ENCODE measurements at regions of chrX and their contacts with region 1.

Region 1: DNA sequence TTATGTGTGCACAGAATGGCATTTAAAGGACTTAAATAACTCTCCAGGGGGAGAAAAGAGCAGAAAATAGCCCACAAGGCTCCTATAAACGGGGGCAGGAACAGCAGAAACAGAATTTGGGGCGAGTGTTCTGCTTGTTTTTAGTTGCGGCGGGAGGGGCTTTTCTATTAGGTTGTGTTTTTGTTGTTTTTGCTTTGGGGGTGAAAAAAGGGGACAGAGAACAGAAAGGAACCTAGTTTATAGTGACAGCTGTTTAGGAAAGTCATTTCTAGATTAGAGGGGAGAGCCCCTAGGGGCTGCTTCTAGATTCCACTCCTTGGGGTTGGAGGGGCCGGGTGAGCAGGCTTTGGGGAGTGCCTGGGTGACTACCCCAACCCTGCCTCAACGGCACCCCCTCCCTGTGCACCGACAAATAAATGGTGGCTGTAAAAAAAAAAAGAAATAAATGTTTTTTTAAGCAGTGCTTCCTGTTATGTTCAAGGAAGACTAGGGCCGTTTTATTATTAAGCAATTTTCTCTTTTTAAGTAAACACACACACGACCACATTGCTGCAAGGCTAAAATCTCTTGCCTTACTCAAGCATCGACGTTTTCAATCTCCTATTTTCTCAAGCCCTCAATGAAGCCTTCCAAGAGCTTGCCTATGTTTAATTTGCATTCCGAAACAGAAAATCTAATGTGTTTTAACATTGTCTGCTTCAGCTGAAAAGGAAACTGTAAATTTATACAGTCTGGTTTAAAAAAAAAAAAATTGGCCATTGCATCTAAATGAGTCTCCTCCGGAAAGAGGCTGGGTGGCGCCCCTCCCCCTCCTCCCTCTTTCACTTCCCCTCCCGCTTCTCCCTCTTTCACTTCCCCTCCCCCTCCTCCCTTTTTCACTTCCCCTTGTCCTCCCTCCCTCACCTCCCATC is 123.3 kb upstream of the TBL1X start:
- H3K4me3 Mint-ChIP-seq: peak overlapping the region; percentile 72
- H3K27ac Mint-ChIP-seq: peak overlapping the region; percentile 98
- H3K4me1 Mint-ChIP-seq: peaks cover 38% of the 10 kb centered on the region
- H3K27me3 Mint-ChIP-seq: no peaks in the 10 kb centered on the region

Region 2: DNA sequence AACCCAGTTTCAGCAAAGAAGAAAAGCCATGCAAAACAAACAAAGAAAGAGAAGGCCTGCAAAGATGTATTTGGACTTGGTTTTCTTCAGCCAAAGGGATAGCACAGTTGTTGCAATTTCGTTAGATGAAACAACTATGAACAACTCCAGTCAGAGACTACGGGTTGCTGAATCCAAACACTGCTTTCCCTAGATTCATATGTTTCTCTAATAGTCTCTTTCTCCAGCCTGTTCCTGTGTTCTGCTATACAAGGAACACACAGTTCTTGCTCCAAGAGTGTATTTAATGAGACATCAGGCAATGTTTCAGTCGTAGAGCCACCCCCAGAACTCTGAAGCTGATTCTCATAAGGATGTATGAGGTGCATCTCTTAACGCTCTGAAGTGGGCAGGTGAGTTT is 39.2 kb before region 1 on chrX:
- intact Hi-C with region 1: no loop called
- H3K4me3 Mint-ChIP-seq: no peak overlapping the region
- H3K27ac Mint-ChIP-seq: no peak overlapping the region
- H3K4me1 Mint-ChIP-seq: peaks cover 5% of the 10 kb centered on the region
- H3K27me3 Mint-ChIP-seq: peaks cover 2% of the 10 kb centered on the region

Region 3: GRCh38 chrX:9312922-9313867 is 28.4 kb before region 1 on chrX:
- intact Hi-C with region 1: loop called (anchors 2 kb)
- H3K4me3 Mint-ChIP-seq: no peak overlapping the region
- H3K27ac Mint-ChIP-seq: no peak overlapping the region
- H3K4me1 Mint-ChIP-seq: peaks cover 19% of the 10 kb centered on the region
- H3K27me3 Mint-ChIP-seq: no peaks in the 10 kb centered on the region

Region 4: DNA sequence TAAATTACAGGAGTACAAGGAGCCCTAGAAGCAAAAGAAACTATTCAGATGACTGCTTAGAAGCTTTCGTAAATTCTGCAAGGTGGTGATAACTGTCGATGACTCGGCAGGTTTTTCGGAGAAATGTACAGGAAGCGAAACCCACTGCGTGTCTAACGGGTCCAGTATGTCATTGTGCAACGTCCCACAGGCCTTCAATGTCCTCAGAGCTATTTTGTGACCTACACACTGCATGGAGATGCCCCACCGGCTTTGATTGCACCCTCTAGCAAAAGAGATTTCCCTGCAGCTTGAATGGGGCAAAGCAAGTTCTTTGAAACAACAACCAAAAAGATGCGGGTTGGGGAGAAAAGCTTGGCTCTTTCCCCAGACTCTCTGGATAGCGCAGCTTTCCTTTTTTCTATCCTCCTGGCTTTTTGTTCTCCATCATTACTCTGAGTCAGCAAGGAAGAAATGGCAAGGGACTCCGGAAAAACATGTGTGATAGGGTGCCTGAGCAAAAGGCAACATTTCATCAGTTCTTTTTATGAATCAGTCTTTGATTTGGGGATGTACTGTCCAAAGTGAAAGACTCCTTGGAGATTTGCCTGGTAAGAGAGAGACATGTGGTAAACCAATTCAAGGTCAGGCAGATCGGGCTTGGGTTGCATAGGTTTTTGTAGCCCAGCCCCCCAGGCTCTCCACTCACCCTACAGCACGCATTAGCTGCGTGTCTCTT is 11.3 kb after region 1 on chrX:
- intact Hi-C with region 1: loop called (anchors 1 kb)
- H3K4me3 Mint-ChIP-seq: peak overlapping the region; percentile 57
- H3K27ac Mint-ChIP-seq: peak overlapping the region; percentile 90
- H3K4me1 Mint-ChIP-seq: peaks cover 38% of the 10 kb centered on the region
- H3K27me3 Mint-ChIP-seq: no peaks in the 10 kb centered on the region

Region 5: GRCh38 chrX:9464435-9465371 is 123.2 kb after region 1 on chrX and contains the start of gene TBL1X:
- intact Hi-C with region 1: loop called (anchors 1 kb)
- H3K4me3 Mint-ChIP-seq: peak within 1 kb of the TSS; percentile 76
- H3K27ac Mint-ChIP-seq: peak within 1 kb of the TSS; percentile 73
- H3K4me1 Mint-ChIP-seq: peaks cover 46% of the 10 kb centered on the region
- H3K27me3 Mint-ChIP-seq: no peaks in the 10 kb centered on the region

Region 6: DNA sequence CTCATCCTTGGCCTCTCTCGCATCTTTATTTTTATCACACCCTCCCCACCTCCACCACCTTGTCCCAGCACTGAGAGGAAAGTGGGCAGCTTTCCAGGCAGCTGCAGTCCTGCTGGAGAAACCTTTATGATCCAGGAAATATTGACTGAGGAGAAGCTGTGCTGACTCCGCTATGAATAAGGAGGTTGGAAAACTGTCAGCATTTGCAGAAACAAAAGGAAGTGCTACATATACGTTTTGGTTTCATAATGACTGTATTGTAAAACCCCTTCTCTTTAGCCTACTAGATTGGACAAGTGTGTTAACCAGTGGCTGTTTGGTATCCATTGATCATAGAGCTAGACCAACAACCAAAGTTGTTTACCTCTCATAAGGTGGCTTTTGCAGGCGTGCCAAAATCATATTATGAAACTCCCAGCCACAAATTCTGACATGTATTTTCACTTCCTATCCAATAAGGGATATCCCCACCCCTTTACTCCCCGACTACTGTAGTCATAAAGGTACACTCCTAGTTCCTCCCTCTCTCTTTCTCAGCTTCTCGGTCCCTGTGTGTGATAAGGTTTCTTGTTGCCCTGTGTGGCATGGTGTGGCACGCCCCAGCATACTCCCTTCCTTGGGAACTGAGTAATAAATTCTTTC is 335.7 kb after region 1 on chrX:
- intact Hi-C with region 1: loop called (anchors 10 kb)
- H3K4me3 Mint-ChIP-seq: peak overlapping the region; percentile 63
- H3K27ac Mint-ChIP-seq: peak overlapping the region; percentile 98
- H3K4me1 Mint-ChIP-seq: peaks cover 37% of the 10 kb centered on the region
- H3K27me3 Mint-ChIP-seq: no peaks in the 10 kb centered on the region

Region 7: DNA sequence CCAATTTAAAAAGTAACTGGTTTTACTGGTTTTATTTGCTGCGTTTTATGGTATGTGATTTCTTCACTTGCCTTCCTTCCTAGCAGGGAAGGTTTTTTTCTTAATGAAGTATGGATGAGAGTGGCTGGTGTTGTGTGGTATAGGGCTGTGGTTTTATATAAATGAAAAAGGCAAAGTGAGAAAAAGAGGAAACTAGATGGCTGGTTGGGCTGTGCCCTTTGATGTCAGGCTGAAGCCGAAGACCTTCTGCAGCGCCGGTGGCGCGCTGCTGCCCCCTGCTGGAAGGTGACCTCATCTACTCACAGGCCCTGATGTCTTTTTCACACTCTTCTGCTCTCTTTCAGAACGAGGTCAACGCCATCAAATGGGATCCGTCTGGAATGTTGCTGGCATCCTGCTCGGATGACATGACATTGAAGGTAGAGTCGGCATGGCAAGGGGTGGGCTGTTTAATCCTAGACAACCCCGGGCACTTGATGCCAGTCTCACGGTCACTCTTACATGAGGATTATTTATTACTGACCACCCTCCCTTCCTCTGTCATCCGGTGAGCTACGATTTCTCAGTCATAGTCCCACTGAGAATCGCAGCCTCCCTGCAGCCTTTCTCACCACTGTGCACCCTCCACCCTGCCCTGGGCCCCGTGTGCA is 367.5 kb after region 1 on chrX:
- intact Hi-C with region 1: loop called (anchors 10 kb)
- H3K4me3 Mint-ChIP-seq: no peak overlapping the region
- H3K27ac Mint-ChIP-seq: no peak overlapping the region
- H3K4me1 Mint-ChIP-seq: peaks cover 13% of the 10 kb centered on the region
- H3K27me3 Mint-ChIP-seq: no peaks in the 10 kb centered on the region